ENCODE measurements at regions of chr14 and their contacts with region 1.

Region 1: GRCh38 chr14:100850841-100851585 is 25.1 kb downstream of the MEG3 start:
- DNase-seq: peak; percentile 69
- H3K4me3 Mint-ChIP-seq: no peak overlapping the region
- H3K27ac Mint-ChIP-seq: no peak overlapping the region
- H3K4me1 Mint-ChIP-seq: no peaks in the 10 kb centered on the region
- H3K27me3 Mint-ChIP-seq: peaks cover 2% of the 10 kb centered on the region

Region 2: DNA sequence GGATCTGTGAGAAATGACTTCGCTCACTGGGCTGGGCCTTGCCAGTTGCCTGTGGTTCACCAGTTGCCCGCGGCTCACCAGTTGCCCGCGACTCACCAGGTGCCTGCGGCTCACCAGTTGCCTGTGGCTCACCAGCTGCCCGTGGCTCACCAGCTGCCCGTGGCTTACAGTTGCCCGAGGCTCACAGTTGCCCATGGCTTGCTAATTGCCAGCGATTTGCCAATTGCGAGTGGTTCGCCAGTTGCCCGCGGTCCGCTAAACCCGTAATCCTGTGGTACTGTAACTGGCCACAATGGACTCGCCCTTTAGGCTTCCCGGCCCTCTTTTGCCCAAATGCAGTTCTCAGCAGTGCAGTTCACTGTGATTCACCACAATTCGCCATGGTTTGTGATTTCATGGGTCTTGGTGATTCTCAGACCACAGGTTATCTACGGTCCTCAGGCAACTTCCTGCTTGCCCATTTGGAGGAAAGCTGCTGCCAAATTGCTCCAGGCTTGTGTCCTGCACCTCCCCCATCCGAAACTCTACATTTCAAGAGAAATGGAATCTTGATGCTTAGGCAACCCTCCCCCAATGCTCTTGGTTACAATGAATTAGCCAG is 40.1 kb before region 1 on chr14:
- intact Hi-C with region 1: no loop called
- DNase-seq: no peak
- H3K4me3 Mint-ChIP-seq: no peak overlapping the region
- H3K27ac Mint-ChIP-seq: no peak overlapping the region
- H3K4me1 Mint-ChIP-seq: no peaks in the 10 kb centered on the region
- H3K27me3 Mint-ChIP-seq: peaks cover 4% of the 10 kb centered on the region

Region 3: GRCh38 chr14:100898935-100899853 is 48.2 kb after region 1 on chr14:
- intact Hi-C with region 1: no loop called
- DNase-seq: no peak
- H3K4me3 Mint-ChIP-seq: no peak overlapping the region
- H3K27ac Mint-ChIP-seq: no peak overlapping the region
- H3K4me1 Mint-ChIP-seq: no peaks in the 10 kb centered on the region
- H3K27me3 Mint-ChIP-seq: peaks cover 36% of the 10 kb centered on the region

Region 4: GRCh38 chr14:101235335-101236103 is 384.5 kb after region 1 on chr14:
- intact Hi-C with region 1: loop called (anchors 10 kb)
- DNase-seq: no peak
- H3K4me3 Mint-ChIP-seq: no peak overlapping the region
- H3K27ac Mint-ChIP-seq: no peak overlapping the region
- H3K4me1 Mint-ChIP-seq: no peaks in the 10 kb centered on the region
- H3K27me3 Mint-ChIP-seq: no peaks in the 10 kb centered on the region

Region 5: GRCh38 chr14:101628471-101628966 is 777.5 kb after region 1 on chr14:
- intact Hi-C with region 1: loop called (anchors 1 kb)
- DNase-seq: peak; percentile 58
- H3K4me3 Mint-ChIP-seq: no peak overlapping the region
- H3K27ac Mint-ChIP-seq: no peak overlapping the region
- H3K4me1 Mint-ChIP-seq: no peaks in the 10 kb centered on the region
- H3K27me3 Mint-ChIP-seq: peaks cover 2% of the 10 kb centered on the region

Measured in activated T-helper 2 cell treated with anti-CD3 and anti-CD28 coated beads, Interferon-gamma antibody, Interleukin-2, Interleukin-4, amounts not matched to agents 10 μg/mL and 5 μg/mL and 100 μg/mL, durations not matched to agents 14 hours and 24 hours and 36 hours (primary cell).